Activated CD4-positive, alpha-beta memory T cell treated with anti-CD3 and anti-CD28 coated beads, Interleukin-2, amount 10 ng/mL, durations not matched to agents 7 days and 5 days (primary cell): ENCODE measurements at regions of chr22 and their contacts with region 1.

Region 1: DNA sequence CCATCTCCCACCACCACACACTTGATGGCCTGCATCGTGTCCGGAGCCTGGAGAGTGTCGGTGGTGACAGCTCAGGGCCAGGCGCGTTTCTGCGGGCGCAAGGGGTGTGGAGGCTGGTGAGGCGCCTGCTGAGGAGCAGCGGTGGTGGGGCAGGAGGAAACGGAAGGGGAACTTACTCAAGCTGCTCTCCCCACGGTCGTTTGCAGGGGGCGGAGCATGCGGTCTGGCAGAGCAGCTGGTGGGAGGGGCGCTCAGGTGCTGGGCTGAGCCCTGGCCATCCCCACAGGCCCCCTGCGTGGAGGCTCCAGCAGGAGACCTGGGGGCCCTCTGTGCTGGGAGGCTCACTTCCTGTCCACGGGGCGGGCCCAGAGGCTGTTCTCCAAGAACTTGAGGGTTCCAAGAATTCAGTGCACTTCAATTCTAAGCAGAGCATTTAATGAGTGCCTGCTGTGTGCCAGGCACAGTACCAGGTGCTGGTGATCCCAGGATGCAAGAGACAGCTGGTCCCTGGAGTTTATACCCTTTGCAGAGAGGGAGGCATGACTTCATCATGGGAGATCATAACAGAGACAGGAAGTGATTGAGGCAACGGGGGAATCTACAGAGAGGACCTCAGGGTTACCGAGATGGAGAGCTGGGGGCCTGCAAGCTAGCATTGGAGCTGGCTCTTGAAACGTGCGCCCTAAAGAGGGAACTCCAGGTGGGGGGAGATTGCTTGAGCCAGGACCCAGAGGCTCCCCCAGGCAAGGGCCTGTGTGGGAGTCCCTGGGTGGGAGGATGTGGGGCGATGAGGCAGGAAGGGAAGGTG is at the start of gene RAC2:
- DNase-seq: peak; percentile 95
- H3K4me3 Mint-ChIP-seq: peak within 1 kb of the TSS; percentile 100
- H3K27ac Mint-ChIP-seq: peak within 1 kb of the TSS; percentile 97
- H3K4me1 Mint-ChIP-seq: peaks cover 51% of the 10 kb centered on the region
- H3K27me3 Mint-ChIP-seq: no peaks in the 10 kb centered on the region
- total RNA-seq, gene RAC2: 984 to 1,005 TPM

Region 2: GRCh38 chr22:37121887-37122591 is 122.3 kb before region 1 on chr22:
- CTCF ChIA-PET with region 1: interaction called, 5 read pairs
- POLR2A ChIA-PET with region 1: interaction called, 43 read pairs
- DNase-seq: peak; percentile 96
- H3K4me3 Mint-ChIP-seq: peak overlapping the region; percentile 74
- H3K27ac Mint-ChIP-seq: peak overlapping the region; percentile 99
- H3K4me1 Mint-ChIP-seq: peaks cover 88% of the 10 kb centered on the region
- H3K27me3 Mint-ChIP-seq: no peaks in the 10 kb centered on the region

Region 3: DNA sequence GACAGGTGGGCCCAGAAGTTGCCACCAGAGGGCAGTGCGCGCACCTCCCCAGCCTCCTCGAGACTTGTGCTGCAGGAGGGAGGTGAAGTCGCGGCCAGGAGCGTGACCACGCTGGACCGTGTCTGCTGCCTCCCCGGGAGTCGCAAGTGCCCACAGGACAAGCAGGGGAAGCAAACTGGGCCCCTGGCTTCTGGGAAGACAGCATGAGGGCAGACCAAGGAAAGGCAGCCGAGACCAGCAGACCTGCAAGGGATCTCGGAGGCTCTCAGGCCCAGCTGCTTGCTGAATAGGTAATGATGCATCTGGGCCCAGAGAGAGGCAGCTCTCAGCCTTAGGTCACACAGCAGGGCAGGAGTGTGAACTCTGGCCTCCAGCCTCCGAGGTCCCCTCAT is 77.6 kb before region 1 on chr22:
- CTCF ChIA-PET with region 1: interaction called, 6 read pairs
- POLR2A ChIA-PET with region 1: interaction called, 38 read pairs
- DNase-seq: peak; percentile 87
- H3K4me3 Mint-ChIP-seq: peak overlapping the region; percentile 71
- H3K27ac Mint-ChIP-seq: peak overlapping the region; percentile 94
- H3K4me1 Mint-ChIP-seq: peaks cover 85% of the 10 kb centered on the region
- H3K27me3 Mint-ChIP-seq: no peaks in the 10 kb centered on the region

Region 4: DNA sequence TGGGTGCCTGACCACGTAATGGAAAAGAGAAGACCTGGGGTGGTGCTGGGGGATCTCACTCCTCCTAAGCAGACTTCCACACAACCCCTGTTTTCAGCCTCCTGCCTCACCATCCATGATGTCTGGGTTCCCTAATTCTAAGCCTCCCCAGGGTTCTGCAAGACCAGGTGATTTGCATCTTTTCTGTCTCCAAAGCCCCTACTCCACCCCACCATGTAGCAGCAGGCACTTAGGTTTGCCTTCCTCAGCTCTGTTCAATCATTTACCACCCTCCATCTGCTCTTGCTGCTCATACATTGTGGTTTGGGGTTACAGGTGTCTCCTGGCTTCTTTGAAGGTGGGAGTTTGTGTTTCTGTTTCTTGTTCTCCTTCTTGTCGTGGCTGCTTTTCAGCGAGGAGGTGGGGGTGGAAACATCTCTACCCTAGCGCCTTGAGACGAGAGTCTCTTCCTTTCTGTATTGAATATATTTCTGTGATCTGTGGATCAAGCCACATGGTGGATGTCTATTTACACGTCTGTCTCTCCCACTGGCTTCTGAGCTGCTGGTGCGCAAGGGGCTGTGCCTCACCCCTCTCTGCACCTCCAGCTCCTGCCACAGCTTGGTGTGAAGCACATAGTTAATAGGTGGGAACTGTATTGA is 25.4 kb before region 1 on chr22:
- CTCF ChIA-PET with region 1: interaction called, 10 read pairs
- POLR2A ChIA-PET with region 1: interaction called, 150 read pairs
- DNase-seq: peak; percentile 72
- H3K4me3 Mint-ChIP-seq: peak overlapping the region; percentile 63
- H3K27ac Mint-ChIP-seq: peak overlapping the region; percentile 93
- H3K4me1 Mint-ChIP-seq: peaks cover 65% of the 10 kb centered on the region
- H3K27me3 Mint-ChIP-seq: peaks cover 1% of the 10 kb centered on the region

Region 5: GRCh38 chr22:37260901-37261336 is 16.6 kb after region 1 on chr22:
- CTCF ChIA-PET with region 1: interaction called, 136 read pairs
- POLR2A ChIA-PET with region 1: interaction called, 72 read pairs
- DNase-seq: peak; percentile 68
- H3K4me3 Mint-ChIP-seq: no peak overlapping the region
- H3K27ac Mint-ChIP-seq: no peak overlapping the region
- H3K4me1 Mint-ChIP-seq: peaks cover 25% of the 10 kb centered on the region
- H3K27me3 Mint-ChIP-seq: peaks cover 10% of the 10 kb centered on the region

Region 6: GRCh38 chr22:37282385-37282677 is 38.0 kb after region 1 on chr22 and contains the start of gene CYTH4:
- CTCF ChIA-PET with region 1: interaction called, 4 read pairs
- POLR2A ChIA-PET with region 1: interaction called, 54 read pairs
- DNase-seq: peak; percentile 84
- H3K4me3 Mint-ChIP-seq: peak within 1 kb of the TSS; percentile 94
- H3K27ac Mint-ChIP-seq: peak within 1 kb of the TSS; percentile 95
- H3K4me1 Mint-ChIP-seq: peaks cover 59% of the 10 kb centered on the region
- H3K27me3 Mint-ChIP-seq: peaks cover 1% of the 10 kb centered on the region
- total RNA-seq, gene CYTH4: 114 to 126 TPM

Region 7: GRCh38 chr22:37486224-37486845 is 242.0 kb after region 1 on chr22 and contains the start of gene MFNG:
- CTCF ChIA-PET with region 1: no interaction called
- POLR2A ChIA-PET with region 1: interaction called, 39 read pairs
- DNase-seq: peak; percentile 82
- H3K4me3 Mint-ChIP-seq: peak within 1 kb of the TSS; percentile 98
- H3K27ac Mint-ChIP-seq: peak within 1 kb of the TSS; percentile 94
- H3K4me1 Mint-ChIP-seq: peaks cover 56% of the 10 kb centered on the region
- H3K27me3 Mint-ChIP-seq: no peaks in the 10 kb centered on the region
- total RNA-seq, gene MFNG: 200 to 203 TPM